ENCODE measurements at regions of chrX and their contacts with region 1.

Region 1: GRCh38 chrX:24241822-24242648 is 71.8 kb downstream of the SUPT20HL2 start:
- DNase-seq: no peak
- H3K4me3 ChIP-seq: no peak overlapping the region
- H3K27ac ChIP-seq: no peak overlapping the region
- H3K27me3 ChIP-seq: no peaks in the 10 kb centered on the region
- CTCF ChIP-seq: peak; percentile 38

Region 2: DNA sequence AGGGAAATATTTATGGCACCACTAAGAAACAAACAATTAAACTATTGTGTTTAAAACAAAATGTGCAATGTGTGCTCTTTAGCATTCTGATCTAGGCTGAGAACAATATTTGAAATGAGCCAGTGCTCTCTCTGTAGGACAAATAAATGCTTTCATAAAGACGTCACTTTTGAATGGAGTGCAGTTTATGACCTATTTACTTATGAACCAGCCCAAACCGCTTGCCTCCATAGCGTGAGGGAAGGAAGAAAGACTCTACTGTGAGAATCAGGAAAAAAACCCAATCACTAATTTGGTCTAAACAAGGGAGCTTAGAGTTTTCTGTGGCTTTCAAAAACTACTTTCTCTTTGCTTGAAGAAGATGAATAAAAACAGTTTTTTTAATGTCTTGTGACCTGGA is 419.6 kb before region 1 on chrX:
- CTCF ChIA-PET with region 1: no interaction called
- POLR2A ChIA-PET with region 1: no interaction called
- DNase-seq: no peak
- H3K4me3 ChIP-seq: no peak overlapping the region
- H3K27ac ChIP-seq: no peak overlapping the region
- H3K27me3 ChIP-seq: no peaks in the 10 kb centered on the region
- CTCF ChIP-seq: no peak

Region 3: DNA sequence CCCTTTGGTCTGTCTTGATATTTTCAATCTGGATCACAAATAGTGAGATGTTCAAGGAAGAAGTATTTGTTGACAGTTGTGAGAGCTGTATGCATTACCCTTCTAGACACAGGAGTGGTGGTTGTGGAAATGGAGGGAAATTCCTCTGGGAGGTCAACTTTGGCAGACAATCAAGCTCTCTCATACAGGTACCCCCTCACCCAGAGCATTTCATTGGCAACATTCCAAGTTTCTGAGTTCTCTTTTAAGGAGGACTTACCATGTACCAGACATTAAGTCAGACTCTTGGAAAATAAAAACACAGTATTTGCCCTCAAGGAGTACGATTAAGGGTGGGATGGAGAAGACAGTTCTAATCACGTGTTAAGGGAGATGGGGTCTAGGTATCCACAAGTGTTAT is 260.3 kb before region 1 on chrX:
- CTCF ChIA-PET with region 1: interaction called, 11 read pairs
- POLR2A ChIA-PET with region 1: no interaction called
- DNase-seq: no peak
- H3K4me3 ChIP-seq: no peak overlapping the region
- H3K27ac ChIP-seq: no peak overlapping the region
- H3K27me3 ChIP-seq: no peaks in the 10 kb centered on the region
- CTCF ChIP-seq: no peak

Region 4: GRCh38 chrX:24081661-24082264 is 160.3 kb before region 1 on chrX:
- CTCF ChIA-PET with region 1: interaction called, 13 read pairs
- POLR2A ChIA-PET with region 1: no interaction called
- DNase-seq: no peak
- H3K4me3 ChIP-seq: no peak overlapping the region
- H3K27ac ChIP-seq: no peak overlapping the region
- H3K27me3 ChIP-seq: no peaks in the 10 kb centered on the region
- CTCF ChIP-seq: peak; percentile 50